ENCODE measurements at regions of chr19 and their contacts with region 1.

Region 1: DNA sequence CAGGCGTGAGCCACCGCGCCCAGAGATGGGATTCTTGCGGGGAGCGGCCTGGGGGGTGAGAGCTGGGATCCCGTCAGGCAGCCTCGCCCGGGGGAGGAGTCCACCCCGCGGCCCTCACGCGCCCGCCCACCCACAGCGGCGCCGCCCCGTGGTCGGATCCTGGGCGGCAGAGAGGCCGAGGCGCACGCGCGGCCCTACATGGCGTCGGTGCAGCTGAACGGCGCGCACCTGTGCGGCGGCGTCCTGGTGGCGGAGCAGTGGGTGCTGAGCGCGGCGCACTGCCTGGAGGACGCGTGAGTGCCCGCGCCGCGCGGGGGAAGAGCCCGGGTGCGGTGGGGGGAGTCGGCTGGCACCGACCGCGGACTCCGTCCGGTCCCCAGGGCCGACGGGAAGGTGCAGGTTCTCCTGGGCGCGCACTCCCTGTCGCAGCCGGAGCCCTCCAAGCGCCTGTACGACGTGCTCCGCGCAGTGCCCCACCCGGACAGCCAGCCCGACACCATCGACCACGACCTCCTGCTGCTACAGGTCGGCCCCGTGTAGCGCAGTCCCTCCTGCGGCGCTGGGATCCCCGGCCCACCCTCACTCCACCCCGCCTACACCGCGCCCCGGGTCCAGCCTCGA is 1.1 kb downstream of the CFD start:
- DNase-seq: peak; percentile 77 to 95
- H3K4me3 ChIP-seq: no peak overlapping the region
- CTCF ChIP-seq: no peak
- POLR2A ChIP-seq: no peak

Region 2: DNA sequence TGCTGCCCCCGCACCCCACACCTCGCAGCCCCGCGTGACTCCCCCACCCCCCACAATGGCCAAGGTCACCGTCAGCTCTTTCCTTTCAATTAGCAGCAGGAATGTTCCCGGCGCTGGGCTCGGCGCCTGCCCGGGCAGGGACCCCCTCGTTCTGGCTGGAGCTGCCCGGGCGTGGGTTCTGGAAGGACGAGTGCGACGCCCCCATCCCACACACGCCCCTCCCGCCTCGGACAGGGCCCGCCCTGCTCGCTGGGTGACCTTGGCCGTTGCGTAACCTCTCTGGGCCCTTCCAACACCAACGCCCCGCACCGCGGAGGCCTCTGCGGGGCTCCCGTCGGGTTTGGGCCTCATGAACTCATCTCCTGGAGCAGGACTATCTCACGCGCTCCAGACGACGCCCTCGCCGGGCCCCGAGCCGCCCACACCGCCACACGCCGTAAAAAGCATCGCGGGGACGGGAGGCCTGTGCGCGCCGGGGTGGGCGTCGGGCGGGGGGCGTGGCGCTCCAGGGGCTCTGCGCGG is 141.5 kb before region 1 on chr19:
- intact Hi-C with region 1: no loop called
- DNase-seq: peak; percentile 32 to 93
- H3K4me3 ChIP-seq: no peak overlapping the region
- CTCF ChIP-seq: no peak
- POLR2A ChIP-seq: no peak

Region 3: DNA sequence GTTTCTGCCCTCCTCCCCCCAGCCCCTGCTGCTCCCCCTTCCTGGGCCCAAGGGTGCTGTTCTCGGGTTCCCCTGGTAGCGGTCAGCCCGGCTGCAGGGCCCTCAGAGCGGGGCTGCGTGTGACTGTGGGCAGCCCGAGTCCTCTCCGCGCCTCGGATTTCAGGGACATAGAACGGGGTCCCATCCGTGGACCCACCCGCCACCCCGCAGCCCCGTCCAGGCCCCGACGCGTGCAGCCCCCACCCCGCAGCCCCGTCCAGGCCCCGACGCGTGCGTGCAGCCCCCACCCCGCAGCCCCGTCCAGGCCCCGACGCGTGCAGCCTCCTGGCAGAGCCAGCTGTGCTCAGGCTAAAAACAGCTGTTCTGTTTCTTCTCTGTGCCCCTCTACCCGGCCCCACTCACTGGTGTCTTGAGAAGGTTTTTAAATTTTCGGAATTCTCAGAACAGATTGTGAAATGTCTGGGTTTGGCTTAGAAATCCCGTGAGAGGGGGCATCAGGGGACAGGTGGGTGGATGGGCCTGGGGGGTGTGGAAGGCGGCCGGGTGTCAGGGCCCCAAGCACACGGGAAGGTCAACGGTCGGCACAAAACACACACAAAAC is 25.3 kb before region 1 on chr19:
- intact Hi-C with region 1: loop called (anchors 1 kb)
- DNase-seq: no peak
- H3K4me3 ChIP-seq: no peak overlapping the region
- CTCF ChIP-seq: no peak
- POLR2A ChIP-seq: no peak

Region 4: DNA sequence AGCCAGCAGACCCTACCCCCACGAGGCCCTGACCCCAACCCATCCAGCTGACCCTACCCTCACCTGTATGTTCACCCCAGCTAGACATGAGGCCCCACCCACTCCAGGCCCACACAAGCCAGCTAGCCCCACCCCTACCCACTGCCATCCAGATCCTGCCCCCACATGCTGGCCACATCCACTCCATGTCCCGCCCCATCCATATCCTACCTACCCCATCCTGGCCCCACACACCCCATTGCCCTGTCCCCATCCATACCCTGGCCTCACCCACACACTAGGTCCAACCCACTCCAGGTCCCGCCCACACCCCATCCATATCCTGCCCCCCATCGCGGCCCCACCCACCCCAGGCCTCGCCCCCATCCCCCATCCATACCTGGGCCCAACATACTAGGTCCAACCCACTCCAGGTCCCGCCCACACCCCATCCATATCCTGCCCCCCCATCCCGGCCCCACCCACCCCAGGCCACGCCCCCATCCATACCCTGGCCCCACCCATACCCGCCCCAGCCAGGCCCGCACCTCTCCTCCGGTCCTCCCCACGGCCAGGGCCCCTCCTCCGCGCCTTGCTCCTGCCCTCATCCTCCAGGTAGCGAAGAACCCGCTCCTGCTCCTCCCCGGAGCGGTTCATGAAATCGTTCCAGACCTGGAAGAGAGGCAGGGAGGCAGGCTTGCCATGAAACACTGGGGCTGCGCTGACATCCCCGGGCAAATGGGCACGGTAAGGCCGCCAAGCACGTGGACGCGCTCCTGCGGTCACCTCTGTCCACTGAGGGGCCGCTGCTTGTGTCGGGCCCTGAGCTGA is 39.9 kb after region 1 on chr19:
- intact Hi-C with region 1: no loop called
- DNase-seq: no peak
- H3K4me3 ChIP-seq: no peak overlapping the region
- CTCF ChIP-seq: no peak
- POLR2A ChIP-seq: no peak

Region 5: GRCh38 chr19:917323-918151 is 56.9 kb after region 1 on chr19 and contains the start of gene KISS1R:
- intact Hi-C with region 1: loop called (anchors 2 kb)
- DNase-seq: no peak
- H3K4me3 ChIP-seq: peak within 1 kb of the TSS; percentile 15
- CTCF ChIP-seq: no peak
- POLR2A ChIP-seq: no peak
- total RNA-seq, gene KISS1R: 0.88 to 3.5 TPM in 2 of 4 donors, not detected in the others

Measured in lower leg skin (tissue), 4 donors.